Calu3 (cell line): ENCODE measurements at regions of chr7 and their contacts with region 1.

Region 1: DNA sequence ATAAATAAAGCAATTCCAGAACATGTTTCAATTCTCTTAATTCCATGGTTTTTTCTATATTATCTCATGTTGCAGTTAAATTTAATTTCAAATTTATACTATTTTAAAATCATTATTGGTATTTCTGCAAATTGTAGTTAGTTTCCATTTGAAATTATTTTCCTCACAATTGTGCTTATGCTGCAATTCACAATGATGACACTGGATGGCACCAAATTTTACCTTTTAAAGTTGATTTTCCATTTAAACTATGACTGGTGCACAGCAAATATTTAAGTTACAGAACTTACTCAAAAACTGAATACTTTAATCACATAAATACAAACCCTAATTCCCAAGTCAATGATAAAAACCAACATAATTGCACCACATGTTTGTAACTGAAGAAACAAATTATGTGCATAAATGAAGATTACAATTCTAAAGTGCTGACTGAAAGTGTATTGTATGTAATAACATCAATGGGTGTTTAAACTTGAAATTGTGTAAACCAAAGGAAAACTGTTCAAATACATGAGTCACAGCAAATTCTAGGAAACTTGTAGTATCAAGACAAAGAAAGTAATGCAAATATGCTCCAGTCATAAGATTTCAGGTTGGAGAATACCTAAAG is 75.3 kb upstream of the AASS start:
- DNase-seq: peak; percentile 10
- H3K4me3 Mint-ChIP-seq: no peak overlapping the region
- H3K27ac Mint-ChIP-seq: no peak overlapping the region
- H3K4me1 Mint-ChIP-seq: peaks cover 8% of the 10 kb centered on the region
- H3K27me3 Mint-ChIP-seq: no peaks in the 10 kb centered on the region
- CTCF ChIP-seq: peak; percentile 32

Region 2: GRCh38 chr7:122337011-122337410 is 117.7 kb after region 1 on chr7:
- CTCF ChIA-PET with region 1: no interaction called
- intact Hi-C with region 1: no loop called
- DNase-seq: no peak
- H3K4me3 Mint-ChIP-seq: no peak overlapping the region
- H3K27ac Mint-ChIP-seq: no peak overlapping the region
- H3K4me1 Mint-ChIP-seq: no peaks in the 10 kb centered on the region
- H3K27me3 Mint-ChIP-seq: no peaks in the 10 kb centered on the region
- CTCF ChIP-seq: no peak

Region 3: GRCh38 chr7:122528879-122529481 is 309.6 kb after region 1 on chr7:
- CTCF ChIA-PET with region 1: interaction called, 8 read pairs
- intact Hi-C with region 1: loop called (anchors 1 kb)
- DNase-seq: no peak
- H3K4me3 Mint-ChIP-seq: no peak overlapping the region
- H3K27ac Mint-ChIP-seq: no peak overlapping the region
- H3K4me1 Mint-ChIP-seq: no peaks in the 10 kb centered on the region
- H3K27me3 Mint-ChIP-seq: no peaks in the 10 kb centered on the region
- CTCF ChIP-seq: no peak